Activated CD4-positive, alpha-beta T cell treated with anti-CD3 and anti-CD28 coated beads, Interleukin-2, amount 10 ng/mL, durations not matched to agents 24 days and 14 days (primary cell): ENCODE measurements at regions of chr7 and their contacts with region 1.

Region 1: GRCh38 chr7:135575296-135575695 is 17.6 kb downstream of the NUP205 start:
- DNase-seq: peak; percentile 70
- H3K4me3 Mint-ChIP-seq: no peak overlapping the region
- H3K27ac Mint-ChIP-seq: peak overlapping the region; percentile 63
- H3K4me1 Mint-ChIP-seq: peaks cover 8% of the 10 kb centered on the region
- H3K27me3 Mint-ChIP-seq: no peaks in the 10 kb centered on the region

Region 2: GRCh38 chr7:135368416-135369186 is 206.7 kb before region 1 on chr7:
- intact Hi-C with region 1: no loop called
- DNase-seq: no peak
- H3K4me3 Mint-ChIP-seq: no peak overlapping the region
- H3K27ac Mint-ChIP-seq: no peak overlapping the region
- H3K4me1 Mint-ChIP-seq: peaks cover 2% of the 10 kb centered on the region
- H3K27me3 Mint-ChIP-seq: no peaks in the 10 kb centered on the region

Region 3: GRCh38 chr7:135558337-135558767 is 16.9 kb before region 1 on chr7:
- intact Hi-C with region 1: no loop called
- DNase-seq: peak; percentile 89
- H3K4me3 Mint-ChIP-seq: no peak overlapping the region
- H3K27ac Mint-ChIP-seq: no peak overlapping the region
- H3K4me1 Mint-ChIP-seq: peaks cover 14% of the 10 kb centered on the region
- H3K27me3 Mint-ChIP-seq: peaks cover 2% of the 10 kb centered on the region

Region 4: DNA sequence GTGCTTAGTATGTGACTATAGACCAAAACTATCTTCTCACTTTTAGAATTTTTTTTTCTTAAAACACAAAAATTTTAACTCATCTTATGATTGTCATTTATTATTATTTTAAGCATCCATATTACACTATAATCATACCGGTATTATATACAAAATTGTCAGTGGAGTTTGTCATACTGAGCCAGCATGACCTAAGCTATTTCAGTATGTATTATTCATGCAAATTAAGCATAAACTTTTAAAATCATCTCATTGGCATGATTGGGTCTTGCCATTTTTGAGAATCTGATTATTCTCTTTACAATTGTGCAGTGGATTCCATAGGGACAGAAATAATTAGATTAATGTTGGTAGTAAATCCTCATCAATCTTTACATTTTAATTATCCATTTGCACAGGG is 40.8 kb after region 1 on chr7:
- intact Hi-C with region 1: loop called (anchors 5 kb)
- DNase-seq: no peak
- H3K4me3 Mint-ChIP-seq: no peak overlapping the region
- H3K27ac Mint-ChIP-seq: no peak overlapping the region
- H3K4me1 Mint-ChIP-seq: no peaks in the 10 kb centered on the region
- H3K27me3 Mint-ChIP-seq: no peaks in the 10 kb centered on the region